ACHN (cell line): ENCODE measurements at regions of chr4 and their contacts with region 1.

Region 1: DNA sequence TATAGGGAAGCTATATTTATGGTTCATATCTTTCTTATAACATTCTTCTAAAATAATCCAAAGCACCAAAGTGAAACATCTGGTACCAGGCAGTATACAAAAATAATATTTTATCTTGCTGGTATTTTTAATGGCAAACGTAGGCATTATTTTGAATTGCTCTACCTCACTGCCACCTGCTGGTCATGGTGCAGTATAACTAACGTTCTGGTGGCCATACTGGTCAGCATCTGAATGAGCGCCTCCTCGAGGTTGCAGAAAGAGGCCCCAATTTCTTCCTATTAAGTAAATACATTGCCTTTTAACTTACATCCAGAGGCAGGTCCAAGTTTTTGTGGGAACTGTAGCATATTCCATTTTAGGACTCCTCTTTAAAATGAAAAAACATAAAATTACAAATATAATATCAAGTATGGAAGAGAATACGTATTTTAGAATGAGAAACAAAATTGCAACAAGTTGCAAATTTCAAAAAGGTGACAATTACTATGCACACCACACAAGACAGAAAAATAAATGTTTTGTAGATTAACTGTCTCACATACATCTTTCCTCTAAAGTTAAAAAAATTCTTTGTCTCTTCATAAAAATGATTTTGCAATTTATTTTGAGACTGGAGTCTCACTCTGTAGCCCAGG is 22.9 kb upstream of the CWH43 start:
- DNase-seq: peak; percentile 82

Region 2: GRCh38 chr4:48557478-48557877 is 405.7 kb before region 1 on chr4:
- in situ Hi-C with region 1: loop called (anchors 25 kb)
- DNase-seq: peak; percentile 15

Region 3: DNA sequence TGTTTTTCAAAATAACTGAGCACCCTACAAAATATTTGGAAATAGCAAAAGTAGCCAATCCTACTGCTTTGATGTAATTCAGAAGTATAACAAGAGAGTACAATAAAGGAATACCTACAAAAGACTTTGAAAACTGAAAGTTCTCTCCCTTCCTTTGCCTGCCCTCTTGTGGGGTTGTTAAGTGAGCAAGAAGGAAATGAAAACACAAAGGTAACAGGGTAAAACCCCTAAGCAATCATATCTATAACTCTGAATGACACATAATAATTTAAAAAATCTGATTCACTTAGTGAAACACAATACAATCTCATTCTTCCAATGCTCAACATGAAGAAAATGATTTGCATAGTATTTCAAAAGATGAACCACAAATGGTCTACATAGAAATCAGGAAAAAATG is 281.3 kb before region 1 on chr4:
- in situ Hi-C with region 1: no loop called
- DNase-seq: peak; percentile 46

Region 4: DNA sequence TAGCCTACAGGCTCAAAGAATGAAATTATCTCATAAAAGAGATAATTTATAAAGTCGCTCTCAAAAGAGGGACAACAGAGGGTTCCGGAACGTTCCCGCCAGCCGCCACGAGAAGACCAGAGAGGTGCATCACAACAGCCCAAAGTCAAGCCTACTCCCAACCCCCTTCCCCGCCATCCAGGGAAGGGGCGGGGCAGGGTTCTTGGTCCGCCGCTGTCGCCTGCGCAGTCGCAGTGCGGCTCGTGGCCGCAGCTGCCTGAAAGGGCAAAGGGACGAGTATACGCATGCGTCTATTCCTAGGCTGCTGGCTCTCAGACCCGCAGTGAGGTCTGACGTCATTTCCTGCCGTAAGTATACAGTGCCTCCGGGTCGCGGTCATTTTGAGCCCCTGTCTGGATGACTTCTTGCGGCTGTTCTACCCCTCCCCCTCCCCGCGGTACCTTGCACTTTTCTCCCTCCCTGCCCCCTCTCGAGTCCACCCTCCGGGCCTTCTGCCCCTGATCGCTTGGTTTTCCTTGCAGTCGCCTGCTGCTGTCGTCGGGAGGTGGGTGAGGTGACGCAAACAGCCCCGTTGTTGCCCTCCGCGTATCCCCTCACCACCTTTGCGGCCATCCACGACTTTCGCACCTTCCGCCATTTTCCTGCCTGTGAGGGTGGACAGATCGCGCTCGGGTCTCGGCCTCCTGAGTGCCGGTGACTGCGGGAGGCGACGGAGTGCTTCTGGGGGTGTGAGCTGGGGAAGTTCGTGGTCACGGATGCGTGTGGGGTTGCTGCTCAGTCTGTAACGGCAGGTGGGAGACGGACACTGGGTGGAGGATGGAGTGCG is 132.2 kb before region 1 on chr4 and contains the start of gene OCIAD1:
- in situ Hi-C with region 1: loop called (anchors 25 kb)
- DNase-seq: peak; percentile 99